Left colon (tissue), 2 donors: ENCODE measurements at regions of chr10 and their contacts with region 1.

Region 1: DNA sequence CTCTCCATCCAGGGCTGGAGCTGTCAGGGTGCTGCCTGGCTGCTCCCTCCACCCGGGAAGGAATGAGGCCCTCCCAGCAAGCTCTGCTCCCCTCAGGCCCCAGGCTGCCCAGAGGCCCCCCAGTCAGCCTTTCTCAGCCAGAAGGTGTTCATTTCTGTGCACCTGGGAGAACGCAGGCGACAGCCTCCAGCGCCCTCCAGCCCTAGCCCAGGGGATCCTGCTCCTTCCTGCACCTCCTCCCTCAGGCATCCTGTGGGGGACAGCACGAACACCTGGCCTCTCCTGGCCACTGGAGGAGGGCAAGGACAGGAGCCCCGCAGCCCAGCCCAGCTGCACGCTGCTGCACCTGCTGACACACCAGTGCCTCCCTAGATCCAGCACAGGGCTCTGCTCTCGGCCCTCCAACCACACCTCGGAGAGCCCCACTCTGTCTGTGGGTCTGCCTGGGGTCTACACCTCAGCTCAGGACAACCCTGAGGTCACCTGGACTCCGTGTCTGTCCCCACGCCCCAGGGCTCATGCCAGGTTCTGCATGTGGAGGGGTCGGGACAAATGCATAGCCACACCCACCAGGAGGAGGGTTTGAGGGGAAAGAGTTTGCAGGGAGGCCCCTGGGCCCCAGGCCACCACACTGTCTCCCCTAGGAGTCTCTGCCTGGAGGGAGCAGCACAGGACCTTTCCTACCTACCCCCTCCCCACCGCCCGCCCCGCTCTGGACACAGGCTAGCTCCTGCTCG is 7.4 kb upstream of the PWWP2B start:
- DNase-seq: peak; percentile 14 to 36
- ATAC-seq: peak; percentile 34

Region 2: DNA sequence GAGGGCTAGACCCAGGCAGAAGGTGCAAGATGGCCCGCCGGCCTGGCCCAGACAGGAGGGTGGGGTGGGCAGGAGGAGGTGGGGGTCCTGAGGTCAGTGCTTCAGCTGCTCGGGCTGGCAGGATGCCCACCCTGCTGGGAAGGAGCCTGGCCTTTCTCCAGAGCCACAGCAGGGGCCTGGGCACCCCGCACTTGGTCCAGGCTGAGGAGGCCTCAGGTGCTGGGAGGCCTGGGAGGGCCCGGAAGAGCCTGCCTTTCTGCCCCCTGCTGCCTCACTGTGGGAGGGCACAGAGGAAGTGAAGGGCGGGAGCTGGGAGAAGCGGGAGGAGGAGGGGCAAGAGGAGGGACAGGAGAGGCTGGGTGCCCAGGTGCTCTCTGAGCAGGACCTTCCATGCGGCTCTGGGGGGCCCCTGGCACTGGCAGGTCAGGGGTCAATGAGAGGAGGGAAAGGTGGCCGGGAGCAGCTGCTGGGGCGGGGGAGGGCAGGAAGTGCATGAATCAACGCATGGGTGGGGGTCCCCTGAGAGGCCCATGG is 57.1 kb after region 1 on chr10:
- intact Hi-C with region 1: loop called (anchors 5 kb)
- DNase-seq: peak; percentile 87 to 93
- ATAC-seq: peak; percentile 76

Region 3: DNA sequence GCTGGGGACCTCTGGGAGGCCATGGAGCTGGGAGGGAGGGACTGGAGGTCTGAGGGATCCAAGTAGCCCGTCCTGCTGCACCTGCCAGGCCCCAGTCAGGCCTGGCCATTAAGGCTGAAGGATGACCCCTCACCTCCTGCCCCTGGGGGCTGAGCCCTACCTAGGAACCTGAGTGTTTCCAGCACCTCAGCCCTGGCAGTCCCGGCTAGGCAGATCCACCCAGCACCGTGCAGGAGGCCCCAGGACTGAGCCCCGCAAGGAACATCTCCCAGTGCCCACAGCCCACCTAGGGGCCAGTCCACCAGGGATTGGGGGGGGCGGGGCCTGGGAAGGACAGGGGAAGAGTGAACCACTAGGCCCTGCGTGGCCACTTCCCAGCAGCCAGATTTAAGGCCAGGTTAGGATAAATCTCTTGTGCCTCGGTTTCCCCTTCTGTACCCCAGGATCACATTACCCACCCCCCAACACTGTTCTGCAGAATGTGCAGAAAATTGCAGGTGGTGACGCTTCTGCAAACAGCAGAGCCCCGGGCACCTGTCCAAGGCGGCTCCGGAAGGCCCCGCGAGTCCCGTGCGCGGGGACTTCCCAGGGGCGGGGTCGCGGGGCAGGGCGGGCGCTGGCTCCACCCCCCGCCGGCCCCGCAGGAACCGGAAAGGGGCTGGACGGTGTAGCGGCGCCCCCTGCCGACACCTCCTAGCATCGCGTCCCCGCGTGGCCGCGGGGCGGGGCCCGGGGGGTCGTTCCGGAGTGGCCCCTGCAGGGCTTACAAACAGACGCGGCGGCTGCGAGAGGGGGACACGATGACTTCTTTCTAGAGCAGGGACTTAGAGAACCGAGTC is 63.2 kb after region 1 on chr10:
- intact Hi-C with region 1: loop called (anchors 5 kb)
- DNase-seq: peak; percentile 94 to 97
- ATAC-seq: peak; percentile 71